HCT116 (cell line): ENCODE measurements at regions of chr6 and their contacts with region 1.

Region 1: GRCh38 chr6:1609648-1610496 is at the start of gene FOXC1:
- DNase-seq: peak; percentile 83
- ATAC-seq: peak; percentile 83
- H3K4me3 ChIP-seq: peak within 1 kb of the TSS; percentile 70 to 79
- H3K27ac ChIP-seq: peak within 1 kb of the TSS; percentile 99
- H3K4me1 ChIP-seq: peaks cover 11 to 22% of the 10 kb centered on the region in 2 experiments; a peak in 3 of 4 replicates
- H3K27me3 ChIP-seq: no peaks in the 10 kb centered on the region
- CTCF ChIP-seq: no peak
- POLR2A ChIP-seq: peak; percentile 26
- RAD21 ChIP-seq: no peak
- total RNA-seq, gene FOXC1: 40.7 TPM

Region 2: DNA sequence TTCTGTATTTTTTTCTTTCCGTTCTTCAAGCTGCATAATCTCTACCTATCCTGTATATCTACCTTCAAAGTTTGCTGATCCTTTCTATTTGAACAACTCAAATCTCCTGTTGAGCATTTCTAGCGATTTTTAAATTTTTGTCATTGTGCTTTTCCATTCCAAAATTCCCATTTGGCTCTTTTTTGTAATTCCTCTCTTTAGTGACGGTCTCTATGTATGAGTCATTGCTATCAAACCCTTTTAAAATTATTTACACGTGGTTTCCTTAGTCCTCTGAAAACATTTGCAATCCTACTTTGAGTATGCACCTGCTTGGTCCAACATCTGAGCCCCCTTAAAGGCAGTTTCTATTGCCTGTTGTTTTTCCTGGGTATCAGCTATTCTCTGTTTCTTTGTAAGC is 100.6 kb before region 1 on chr6:
- CTCF ChIA-PET with region 1: no interaction called
- POLR2A ChIA-PET with region 1: no interaction called
- RAD21 ChIA-PET with region 1: interaction called in 1 of 2 experiments, 10 read pairs
- intact Hi-C with region 1: no loop called
- DNase-seq: no peak
- ATAC-seq: no peak
- H3K4me3 ChIP-seq: no peak overlapping the region
- H3K27ac ChIP-seq: no peak overlapping the region
- H3K4me1 ChIP-seq: no peaks in the 10 kb centered on the region
- H3K27me3 ChIP-seq: no peaks in the 10 kb centered on the region
- CTCF ChIP-seq: no peak
- POLR2A ChIP-seq: no peak
- RAD21 ChIP-seq: no peak

Region 3: DNA sequence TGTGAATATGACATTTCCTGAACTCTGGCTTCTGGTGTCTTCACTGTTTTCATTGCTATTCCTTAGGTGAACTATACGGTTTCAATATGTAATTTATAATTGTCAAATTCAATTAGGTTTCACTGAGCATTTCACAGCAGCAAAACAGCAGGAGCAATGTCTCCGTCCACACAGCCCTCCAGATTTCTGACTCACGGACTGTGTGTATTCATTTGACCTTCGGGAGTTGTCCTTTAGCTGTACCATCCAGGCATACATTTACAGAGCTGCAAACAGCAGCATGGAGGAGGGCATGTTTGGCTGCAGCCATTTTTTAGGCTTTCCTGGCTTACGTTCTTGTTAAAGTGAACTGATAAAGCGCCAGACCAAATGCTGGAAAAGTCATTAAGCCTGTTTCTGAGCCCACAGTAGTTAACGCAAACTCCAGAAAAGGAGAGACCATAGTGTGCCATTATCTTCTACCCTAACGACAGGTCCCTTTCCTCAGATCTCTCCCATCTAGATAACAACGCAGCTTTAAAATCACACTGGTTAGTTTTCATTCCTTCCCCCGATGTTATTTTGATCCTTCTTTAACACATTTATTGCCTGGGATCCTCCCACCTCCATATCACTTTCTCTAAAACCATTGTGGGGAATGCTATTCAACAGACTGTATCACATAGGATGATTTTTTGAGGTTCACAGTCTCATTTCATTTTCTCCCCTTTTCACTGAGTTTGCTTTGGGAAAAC is 18.1 kb after region 1 on chr6:
- CTCF ChIA-PET with region 1: interaction called, 3 read pairs
- POLR2A ChIA-PET with region 1: no interaction called
- RAD21 ChIA-PET with region 1: interaction called in 1 of 2 experiments, 3 read pairs
- intact Hi-C with region 1: loop called (anchors 1 kb)
- DNase-seq: no peak
- ATAC-seq: no peak
- H3K4me3 ChIP-seq: no peak overlapping the region
- H3K27ac ChIP-seq: no peak overlapping the region
- H3K4me1 ChIP-seq: peaks cover 24 to 25% of the 10 kb centered on the region in 2 experiments
- H3K27me3 ChIP-seq: no peaks in the 10 kb centered on the region
- CTCF ChIP-seq: no peak
- POLR2A ChIP-seq: no peak
- RAD21 ChIP-seq: no peak

Region 4: GRCh38 chr6:1686117-1687098 is 76.5 kb after region 1 on chr6:
- CTCF ChIA-PET with region 1: interaction called, 7 read pairs
- POLR2A ChIA-PET with region 1: interaction called, 3 read pairs
- RAD21 ChIA-PET with region 1: interaction called in 1 of 2 experiments, 5 read pairs
- intact Hi-C with region 1: loop called (anchors 5 kb)
- DNase-seq: no peak
- ATAC-seq: peak; percentile 46; the same call in 1 of the 2 replicates
- H3K4me3 ChIP-seq: no peak overlapping the region
- H3K27ac ChIP-seq: no peak overlapping the region
- H3K4me1 ChIP-seq: peaks cover 15 to 16% of the 10 kb centered on the region in 2 experiments; a peak in 2 of 4 replicates
- H3K27me3 ChIP-seq: no peaks in the 10 kb centered on the region
- CTCF ChIP-seq: peak; percentile 14 to 47 (median 38); a peak in 4 of 6 replicates
- POLR2A ChIP-seq: no peak
- RAD21 ChIP-seq: peak; percentile 62

Region 5: GRCh38 chr6:2037237-2037926 is 427.5 kb after region 1 on chr6:
- CTCF ChIA-PET with region 1: no interaction called
- POLR2A ChIA-PET with region 1: no interaction called
- RAD21 ChIA-PET with region 1: no interaction called
- intact Hi-C with region 1: loop called (anchors 5 kb)
- DNase-seq: no peak
- ATAC-seq: no peak
- H3K4me3 ChIP-seq: no peak overlapping the region
- H3K27ac ChIP-seq: no peak overlapping the region
- H3K4me1 ChIP-seq: peaks cover 6 to 10% of the 10 kb centered on the region in 2 experiments; a peak in 3 of 4 replicates
- H3K27me3 ChIP-seq: no peaks in the 10 kb centered on the region
- CTCF ChIP-seq: peak in 1 of 3 experiments; percentile 10; a peak in 1 of 6 replicates
- POLR2A ChIP-seq: no peak
- RAD21 ChIP-seq: peak; percentile 43; the same call in 1 of the 2 replicates

Region 6: DNA sequence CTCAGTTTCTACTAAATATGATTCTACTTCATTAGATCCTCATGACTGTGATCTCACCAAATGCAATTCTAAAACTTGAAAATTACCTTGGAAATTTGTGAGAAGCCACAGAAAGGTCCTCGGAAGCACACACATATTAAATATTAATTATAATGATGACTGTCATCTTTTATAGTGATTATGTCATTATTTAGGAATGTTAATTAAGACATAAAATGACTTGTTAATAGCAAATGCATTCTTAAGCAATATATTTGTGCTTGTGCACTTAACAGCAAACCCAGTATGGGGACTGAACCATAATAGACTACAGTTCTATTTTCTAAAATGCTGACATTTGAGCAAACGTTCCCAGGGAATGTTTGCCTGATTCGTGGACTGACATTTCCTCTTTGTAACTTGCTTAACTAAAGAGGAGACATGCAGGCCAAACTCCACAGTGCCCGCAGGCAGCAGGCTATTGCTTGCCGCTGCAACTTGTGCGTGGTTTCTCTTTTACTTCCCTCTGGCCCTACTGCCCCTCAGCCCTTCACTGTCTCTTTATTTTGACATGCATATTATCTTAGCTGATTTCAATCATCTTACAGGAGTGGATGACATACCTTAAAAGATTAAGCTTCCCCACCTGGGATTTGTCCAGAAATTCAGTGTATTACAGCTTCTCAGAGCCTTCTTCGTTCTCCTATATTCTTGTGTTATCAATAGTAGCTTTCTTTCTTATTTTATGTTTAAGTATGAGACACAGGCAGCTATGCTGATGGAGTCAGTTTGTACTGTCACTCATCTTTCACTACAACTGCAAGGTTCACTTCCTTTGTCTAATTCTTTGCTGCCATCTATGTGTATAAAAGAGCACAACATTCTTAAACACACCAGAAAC is 494.0 kb after region 1 on chr6:
- CTCF ChIA-PET with region 1: interaction called, 6 read pairs
- POLR2A ChIA-PET with region 1: interaction called, 4 read pairs
- RAD21 ChIA-PET with region 1: no interaction called
- intact Hi-C with region 1: loop called (anchors 1 kb)
- DNase-seq: peak; percentile 19
- ATAC-seq: peak; percentile 70
- H3K4me3 ChIP-seq: no peak overlapping the region
- H3K27ac ChIP-seq: peak overlapping the region; percentile 29
- H3K4me1 ChIP-seq: peaks cover 6 to 9% of the 10 kb centered on the region in 2 experiments; a peak in 3 of 4 replicates
- H3K27me3 ChIP-seq: no peaks in the 10 kb centered on the region
- CTCF ChIP-seq: peak in 2 of 3 experiments; percentile 45 to 62; a peak in 4 of 6 replicates
- POLR2A ChIP-seq: no peak
- RAD21 ChIP-seq: peak; percentile 78